Right ventricle myocardium superior (tissue), 1 donor: ENCODE measurements at regions of chr3 and their contacts with region 1.

Region 1: GRCh38 chr3:122679085-122679881 is 1.4 kb upstream of the PARP14 start:
- DNase-seq: peak; percentile 83
- ATAC-seq: peak; percentile 84

Region 2: DNA sequence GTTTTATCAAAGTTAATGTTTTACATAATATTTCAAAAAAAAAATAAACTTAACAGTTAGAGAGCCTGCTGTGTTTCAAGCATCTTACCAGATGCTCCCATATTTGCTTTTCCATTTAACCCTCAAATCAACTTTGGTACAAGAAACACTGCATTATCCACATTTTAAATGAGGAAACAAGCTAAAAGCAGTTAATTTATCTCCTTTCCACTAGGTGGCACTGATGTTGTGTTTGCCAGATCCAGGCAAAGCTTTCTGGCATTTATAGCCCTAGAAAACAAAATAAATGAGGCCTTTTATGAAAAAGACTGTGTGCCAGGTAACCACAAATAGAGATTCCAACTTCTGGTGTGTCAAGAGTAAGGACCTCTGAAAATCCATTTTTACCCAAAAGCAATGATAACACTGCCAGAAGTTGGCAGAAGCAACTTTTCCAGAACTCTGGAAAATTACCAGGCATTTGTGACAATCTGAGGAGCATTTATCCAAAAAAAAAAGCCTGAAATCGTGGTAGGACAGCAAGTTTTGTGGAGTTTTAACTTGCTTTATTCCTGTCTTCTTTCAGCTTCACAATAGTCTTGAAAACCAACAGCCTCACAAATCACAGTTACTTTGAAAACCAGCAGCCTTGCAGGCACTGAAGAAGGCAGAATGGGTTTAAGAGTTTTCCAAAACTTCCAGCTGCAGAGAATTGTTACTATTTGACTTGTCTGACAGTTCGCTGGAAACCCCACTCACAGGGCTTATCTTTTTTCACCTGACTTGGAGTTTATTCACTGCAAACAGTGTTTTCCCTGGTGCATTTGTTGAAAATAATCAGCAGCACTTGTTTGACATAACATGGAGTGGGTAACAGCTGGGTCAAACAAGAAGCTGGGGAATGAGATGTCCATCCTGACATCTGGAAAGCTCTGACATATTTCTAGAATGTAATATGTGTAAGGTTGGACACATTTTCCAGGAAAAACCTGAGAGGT is 286.1 kb before region 1 on chr3:
- intact Hi-C with region 1: loop called (anchors 5 kb)
- DNase-seq: no peak
- ATAC-seq: peak; percentile 50

Region 3: DNA sequence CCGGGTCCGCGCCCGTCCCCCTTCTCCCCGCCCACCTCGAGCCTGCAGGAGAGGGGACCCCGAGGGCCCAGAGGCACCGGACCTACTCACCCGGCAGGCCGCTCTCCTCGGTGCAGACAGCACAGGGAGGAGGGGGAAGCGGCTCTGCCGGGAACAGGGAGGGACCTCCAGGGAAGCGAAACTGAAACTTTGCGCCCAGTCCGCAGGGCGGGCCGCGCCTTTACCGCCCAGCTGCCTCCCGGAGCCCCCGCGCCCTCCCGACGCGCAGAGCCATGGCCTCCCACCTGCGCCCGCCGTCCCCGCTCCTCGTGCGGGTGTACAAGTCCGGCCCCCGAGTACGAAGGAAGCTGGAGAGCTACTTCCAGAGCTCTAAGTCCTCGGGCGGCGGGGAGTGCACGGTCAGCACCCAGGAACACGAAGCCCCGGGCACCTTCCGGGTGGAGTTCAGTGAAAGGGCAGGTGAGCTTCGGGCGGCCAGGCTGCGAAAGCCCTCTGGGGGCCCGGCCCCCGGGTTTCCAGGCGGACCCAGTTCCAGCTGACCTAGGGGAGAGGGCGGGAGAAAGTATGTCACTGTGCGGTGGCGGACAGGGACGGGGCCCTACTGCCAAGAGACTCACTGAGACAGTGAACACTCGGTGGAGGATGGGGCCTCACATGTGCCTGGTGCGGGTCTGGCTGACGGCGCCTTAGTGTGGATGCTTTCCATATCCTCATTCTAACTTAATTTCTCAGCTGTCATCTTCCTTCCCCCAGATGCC is 114.9 kb before region 1 on chr3 and contains the starts of genes DTX3L and PARP9:
- intact Hi-C with region 1: loop called (anchors 5 kb)
- DNase-seq: peak; percentile 91
- ATAC-seq: peak; percentile 99
- total RNA-seq, gene DTX3L: 10.2 TPM
- total RNA-seq, gene PARP9: 10.0 TPM

Region 4: DNA sequence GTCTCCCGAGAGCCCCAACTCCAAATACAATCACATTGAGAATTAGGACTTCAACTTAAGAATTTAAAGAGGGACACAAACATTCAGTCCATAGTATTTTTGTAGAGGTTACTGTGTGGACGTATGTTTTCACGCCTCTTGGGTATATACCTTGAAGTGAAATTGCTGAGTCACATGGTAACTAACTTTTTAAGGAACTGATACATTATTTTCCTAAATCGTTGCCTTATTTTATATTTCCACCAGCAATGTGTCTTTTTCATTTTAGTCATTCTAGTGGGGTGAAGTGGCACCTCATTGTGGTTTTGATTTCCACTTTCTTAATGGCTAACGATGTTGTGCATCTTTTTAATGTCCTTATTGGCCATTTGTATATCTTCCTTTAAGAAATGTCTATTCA is 90.0 kb before region 1 on chr3:
- intact Hi-C with region 1: no loop called
- DNase-seq: no peak
- ATAC-seq: no peak